Upper lobe of right lung (tissue), 1 donor: ENCODE measurements at regions of chr10 and their contacts with region 1.

Region 1: DNA sequence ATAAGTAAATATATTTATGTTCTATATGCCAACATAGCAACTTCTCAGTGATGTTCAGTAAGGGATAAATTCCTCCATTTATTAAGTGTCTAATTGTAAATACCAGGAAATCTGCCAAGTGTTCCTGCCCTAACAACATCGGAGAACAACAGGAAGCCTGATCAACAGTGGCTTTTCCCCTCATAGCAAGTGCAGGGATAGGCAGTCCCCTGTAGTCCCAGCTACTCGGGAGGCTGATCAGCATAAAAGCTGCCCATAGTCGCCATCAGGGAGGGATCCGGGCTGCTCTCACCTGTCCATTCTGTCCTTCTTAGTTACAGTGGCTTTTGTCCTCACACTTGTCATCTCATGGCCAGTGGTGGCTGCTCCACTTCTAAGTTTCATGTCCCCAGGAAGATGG is 141.3 kb downstream of the IDE start:
- DNase-seq: no peak
- ATAC-seq: no peak
- H3K4me3 ChIP-seq: no peak overlapping the region
- H3K27ac ChIP-seq: no peak overlapping the region
- H3K4me1 ChIP-seq: no peaks in the 10 kb centered on the region
- H3K27me3 ChIP-seq: no peaks in the 10 kb centered on the region
- CTCF ChIP-seq: no peak

Region 2: DNA sequence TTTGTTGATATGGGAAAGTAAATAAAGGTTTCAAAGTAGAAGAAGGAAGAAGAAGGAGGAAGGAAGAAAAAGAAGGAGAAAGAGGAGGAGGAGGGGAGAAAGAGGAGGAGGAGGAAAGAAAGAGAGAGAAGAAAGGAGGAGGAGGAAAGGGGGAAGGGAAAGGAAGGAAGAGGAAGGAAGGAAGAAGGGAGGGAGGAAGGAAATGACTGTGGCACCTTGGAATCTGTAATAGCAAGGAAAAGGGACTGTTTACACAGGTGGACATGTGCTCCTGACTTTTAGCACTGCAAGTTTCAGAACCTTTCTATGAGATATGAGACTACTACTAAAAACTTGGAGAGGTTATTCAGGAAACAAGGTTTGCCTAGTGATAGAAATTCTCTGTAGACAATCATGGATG is 355.9 kb before region 1 on chr10:
- intact Hi-C with region 1: loop called (anchors 5 kb)
- DNase-seq: no peak
- ATAC-seq: no peak
- H3K4me3 ChIP-seq: no peak overlapping the region
- H3K27ac ChIP-seq: no peak overlapping the region
- H3K4me1 ChIP-seq: no peaks in the 10 kb centered on the region
- H3K27me3 ChIP-seq: no peaks in the 10 kb centered on the region
- CTCF ChIP-seq: no peak